Sciatic nerve (tissue), 2 donors: ENCODE measurements at regions of chr5 and their contacts with region 1.

Region 1: GRCh38 chr5:157718519-157718918 is 12.7 kb upstream of the THG1L start:
- DNase-seq: no peak
- ATAC-seq: peak; percentile 95

Region 2: GRCh38 chr5:157449011-157449723 is 269.4 kb before region 1 on chr5:
- intact Hi-C with region 1: loop called (anchors 10 kb)
- DNase-seq: no peak
- ATAC-seq: peak; percentile 84